ENCODE measurements at regions of chr1 and their contacts with region 1.

Region 1: DNA sequence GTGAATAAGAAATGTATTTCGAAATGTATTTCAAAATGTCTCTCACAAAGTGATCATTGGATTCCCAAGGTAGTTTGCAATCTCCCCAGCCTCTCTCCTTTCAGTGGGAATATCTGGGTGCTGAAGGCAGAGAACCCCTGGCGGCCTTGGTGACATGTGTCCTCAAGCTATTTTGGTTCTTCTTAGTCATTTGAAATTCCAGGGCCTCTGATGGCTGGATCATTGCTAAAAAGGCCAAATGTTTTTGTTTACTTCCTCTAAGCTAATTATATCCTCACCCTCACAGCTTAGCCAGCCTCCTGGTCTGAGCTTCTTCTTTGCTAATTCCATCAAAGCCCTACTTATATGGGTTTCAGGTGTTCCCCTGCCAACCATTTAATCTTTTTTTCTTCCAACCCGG is 71.2 kb downstream of the LRRC40 start:
- DNase-seq: no peak
- H3K4me3 ChIP-seq: no peak overlapping the region
- H3K27ac ChIP-seq: no peak overlapping the region
- H3K4me1 ChIP-seq: no peaks in the 10 kb centered on the region
- H3K27me3 ChIP-seq: no peaks in the 10 kb centered on the region
- CTCF ChIP-seq: no peak

Region 2: DNA sequence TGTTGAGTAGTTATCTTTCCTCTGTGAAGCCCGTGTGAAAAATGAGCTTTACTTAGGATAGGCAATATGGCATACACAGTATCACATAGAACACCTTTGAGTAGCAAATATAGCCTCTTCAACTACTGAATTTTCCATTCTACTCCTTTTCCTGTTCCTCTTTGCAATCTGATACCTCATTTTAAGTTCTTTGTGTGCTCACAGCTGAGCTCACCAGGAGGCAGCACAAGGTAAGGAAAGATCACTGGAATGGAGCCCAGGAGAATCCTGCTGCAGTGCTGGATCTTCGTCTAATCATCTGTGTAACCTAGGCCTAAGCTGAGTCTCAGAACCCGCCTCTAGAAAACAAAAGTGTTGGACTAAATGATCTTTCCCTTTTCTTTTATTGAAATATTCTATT is 99.7 kb before region 1 on chr1:
- CTCF ChIA-PET with region 1: interaction called, 4 read pairs
- dilution Hi-C with region 1: no loop called
- in situ Hi-C with region 1: no loop called
- intact Hi-C with region 1: loop called (anchors 2 kb)
- DNase-seq: peak; percentile 43
- H3K4me3 ChIP-seq: no peak overlapping the region
- H3K27ac ChIP-seq: no peak overlapping the region
- H3K4me1 ChIP-seq: peaks cover 7% of the 10 kb centered on the region
- H3K27me3 ChIP-seq: no peaks in the 10 kb centered on the region
- CTCF ChIP-seq: peak; percentile 69